PC-3 (cell line): ENCODE measurements at regions of chr2 and their contacts with region 1.

Region 1: GRCh38 chr2:1527153-1527992 is 114.1 kb downstream of the TPO start:
- DNase-seq: no peak
- ATAC-seq: peak; percentile 48
- H3K4me3 ChIP-seq: no peak overlapping the region
- H3K27ac ChIP-seq: no peak overlapping the region
- H3K4me1 ChIP-seq: no peaks in the 10 kb centered on the region
- H3K27me3 ChIP-seq: no peaks in the 10 kb centered on the region
- CTCF ChIP-seq: no peak

Region 2: GRCh38 chr2:1544478-1545069 is 17.2 kb after region 1 on chr2:
- CTCF ChIA-PET with region 1: interaction called, 10 read pairs
- POLR2A ChIA-PET with region 1: no interaction called
- intact Hi-C with region 1: no loop called
- DNase-seq: peak; percentile 45
- ATAC-seq: peak; percentile 62
- H3K4me3 ChIP-seq: no peak overlapping the region
- H3K27ac ChIP-seq: no peak overlapping the region
- H3K4me1 ChIP-seq: 0 out of 2 replicates have a peak, but pooled peaks cover 3% of the 10 kb centered on the region
- H3K27me3 ChIP-seq: no peaks in the 10 kb centered on the region
- CTCF ChIP-seq: no peak

Region 3: GRCh38 chr2:1556751-1557466 is 29.5 kb after region 1 on chr2:
- CTCF ChIA-PET with region 1: no interaction called
- POLR2A ChIA-PET with region 1: no interaction called
- intact Hi-C with region 1: no loop called
- DNase-seq: peak; percentile 59
- ATAC-seq: peak; percentile 81
- H3K4me3 ChIP-seq: no peak overlapping the region
- H3K27ac ChIP-seq: no peak overlapping the region
- H3K4me1 ChIP-seq: peaks cover 16% of the 10 kb centered on the region
- H3K27me3 ChIP-seq: no peaks in the 10 kb centered on the region
- CTCF ChIP-seq: no peak

Region 4: DNA sequence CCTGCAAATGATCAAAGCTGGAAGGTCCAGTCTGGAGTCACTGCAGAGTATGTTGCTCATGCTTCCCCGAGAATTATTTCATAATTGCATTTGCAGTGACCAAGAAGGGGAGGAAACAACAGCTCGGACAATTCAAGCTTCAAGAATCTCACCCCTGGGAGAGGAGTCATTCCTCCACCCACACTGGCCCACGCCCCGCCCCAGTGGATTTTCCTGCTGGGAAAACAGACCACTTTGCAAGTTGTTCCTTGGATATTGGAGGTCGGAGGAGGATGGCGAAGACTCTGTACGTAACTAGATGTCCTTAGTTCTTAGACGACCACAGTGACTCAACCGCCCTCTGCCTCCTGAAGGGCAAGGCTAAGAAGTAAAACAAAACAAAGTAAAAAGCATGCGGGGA is 45.3 kb after region 1 on chr2:
- CTCF ChIA-PET with region 1: no interaction called
- POLR2A ChIA-PET with region 1: no interaction called
- intact Hi-C with region 1: no loop called
- DNase-seq: peak; percentile 31
- ATAC-seq: no peak
- H3K4me3 ChIP-seq: no peak overlapping the region
- H3K27ac ChIP-seq: no peak overlapping the region
- H3K4me1 ChIP-seq: peaks cover 1% of the 10 kb centered on the region
- H3K27me3 ChIP-seq: no peaks in the 10 kb centered on the region
- CTCF ChIP-seq: no peak

Region 5: DNA sequence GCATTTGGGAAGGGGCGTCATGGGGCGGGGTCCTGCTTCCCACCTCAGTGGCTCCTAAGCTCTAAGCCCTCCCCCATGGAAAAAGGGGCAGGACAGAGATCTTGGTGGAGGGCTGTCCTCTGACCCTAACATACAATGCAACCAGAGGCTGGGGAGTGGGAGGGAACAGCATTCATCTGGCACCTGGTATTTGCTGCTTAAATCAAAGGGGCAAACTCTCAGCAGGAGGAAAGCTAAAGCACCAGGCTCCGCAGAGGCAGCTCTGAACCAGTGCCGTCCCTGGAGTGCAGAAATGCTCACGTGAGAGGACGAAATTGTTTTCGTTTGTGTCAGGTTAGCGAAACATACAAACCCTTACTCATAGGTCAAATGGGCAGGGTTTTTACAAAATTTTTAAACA is 309.6 kb after region 1 on chr2:
- CTCF ChIA-PET with region 1: no interaction called
- POLR2A ChIA-PET with region 1: no interaction called
- intact Hi-C with region 1: no loop called
- DNase-seq: no peak
- ATAC-seq: no peak
- H3K4me3 ChIP-seq: no peak overlapping the region
- H3K27ac ChIP-seq: no peak overlapping the region
- H3K4me1 ChIP-seq: no peaks in the 10 kb centered on the region
- H3K27me3 ChIP-seq: peaks cover 21% of the 10 kb centered on the region
- CTCF ChIP-seq: no peak